Activated naive CD4-positive, alpha-beta T cell treated with anti-CD3 and anti-CD28 coated beads, Interleukin-2, amount 10 ng/mL, durations not matched to agents 7 days and 5 days (primary cell): ENCODE measurements at regions of chr11 and their contacts with region 1.

Region 1: DNA sequence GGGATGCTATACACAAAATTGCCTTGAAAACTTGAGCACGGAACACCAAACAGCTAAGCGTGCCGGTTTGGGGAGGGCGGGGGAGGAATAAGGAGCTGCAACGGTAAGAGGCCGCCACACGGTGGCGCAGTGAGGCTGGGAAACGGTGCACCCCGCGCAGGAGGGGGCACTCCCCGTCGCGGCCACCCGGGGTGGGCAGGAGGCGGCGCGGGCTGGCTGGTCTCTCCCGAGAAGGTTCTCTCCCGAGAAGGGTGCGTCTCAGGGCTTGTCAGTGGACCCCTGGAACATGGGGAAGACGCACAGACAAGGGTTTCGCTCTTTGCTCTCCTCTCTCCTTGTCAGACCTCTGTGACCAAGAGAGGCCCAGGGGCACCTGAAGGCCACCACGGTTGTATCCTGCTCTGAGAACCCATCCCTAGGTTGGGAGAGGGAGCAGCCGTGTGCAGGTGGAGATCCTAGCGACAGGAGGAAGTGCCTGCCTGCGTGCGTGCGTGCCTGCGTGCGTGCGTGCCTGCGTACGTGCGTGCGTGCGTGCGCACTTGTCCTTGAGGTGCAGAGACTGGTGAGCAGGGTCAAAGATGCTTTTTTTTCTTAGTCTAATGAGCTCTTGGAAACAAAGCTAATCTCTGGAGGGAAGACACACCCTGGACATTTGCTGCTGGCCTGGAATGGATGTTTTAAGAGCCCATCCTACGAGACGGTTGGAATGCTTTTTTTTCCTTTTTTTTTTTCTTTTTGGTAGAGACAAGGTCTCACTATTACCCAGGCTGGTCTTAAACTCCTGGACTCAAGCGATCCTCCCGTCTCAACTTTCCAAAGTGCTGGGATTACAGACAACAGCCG is 18.1 kb upstream of the JAM3 start:
- DNase-seq: peak; percentile 81
- H3K4me3 Mint-ChIP-seq: peak overlapping the region; percentile 64
- H3K27ac Mint-ChIP-seq: peak overlapping the region; percentile 85
- H3K4me1 Mint-ChIP-seq: peaks cover 17% of the 10 kb centered on the region
- H3K27me3 Mint-ChIP-seq: peaks cover 72% of the 10 kb centered on the region

Region 2: GRCh38 chr11:133745791-133746190 is 305.0 kb before region 1 on chr11:
- CTCF ChIA-PET with region 1: no interaction called
- DNase-seq: no peak
- H3K4me3 Mint-ChIP-seq: no peak overlapping the region
- H3K27ac Mint-ChIP-seq: no peak overlapping the region
- H3K4me1 Mint-ChIP-seq: no peaks in the 10 kb centered on the region
- H3K27me3 Mint-ChIP-seq: no peaks in the 10 kb centered on the region

Region 3: DNA sequence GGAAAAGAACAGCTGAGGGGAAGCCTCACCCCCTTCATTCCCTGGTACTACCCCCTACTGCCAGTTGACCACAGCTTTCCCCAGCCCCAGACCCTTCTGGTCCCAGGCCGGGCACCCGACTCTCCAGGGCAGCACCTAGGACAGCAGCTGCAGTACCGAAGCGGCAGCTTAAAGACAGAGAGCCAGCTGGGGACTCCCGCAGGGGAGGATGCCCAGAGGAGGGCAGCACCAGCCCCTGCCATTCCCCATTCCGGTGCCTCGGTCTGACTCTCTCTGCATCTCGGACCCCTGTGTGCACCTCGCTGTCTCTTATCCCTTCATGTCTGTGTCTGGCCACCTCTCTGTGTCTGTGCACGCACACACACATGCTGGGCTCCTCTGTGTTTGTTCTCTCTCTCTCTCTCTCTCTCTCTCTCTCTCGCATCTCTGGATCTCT is 103.4 kb before region 1 on chr11:
- CTCF ChIA-PET with region 1: interaction called, 12 read pairs
- DNase-seq: peak; percentile 86
- H3K4me3 Mint-ChIP-seq: peak overlapping the region; percentile 86
- H3K27ac Mint-ChIP-seq: peak overlapping the region; percentile 87
- H3K4me1 Mint-ChIP-seq: peaks cover 99% of the 10 kb centered on the region
- H3K27me3 Mint-ChIP-seq: no peaks in the 10 kb centered on the region

Region 4: DNA sequence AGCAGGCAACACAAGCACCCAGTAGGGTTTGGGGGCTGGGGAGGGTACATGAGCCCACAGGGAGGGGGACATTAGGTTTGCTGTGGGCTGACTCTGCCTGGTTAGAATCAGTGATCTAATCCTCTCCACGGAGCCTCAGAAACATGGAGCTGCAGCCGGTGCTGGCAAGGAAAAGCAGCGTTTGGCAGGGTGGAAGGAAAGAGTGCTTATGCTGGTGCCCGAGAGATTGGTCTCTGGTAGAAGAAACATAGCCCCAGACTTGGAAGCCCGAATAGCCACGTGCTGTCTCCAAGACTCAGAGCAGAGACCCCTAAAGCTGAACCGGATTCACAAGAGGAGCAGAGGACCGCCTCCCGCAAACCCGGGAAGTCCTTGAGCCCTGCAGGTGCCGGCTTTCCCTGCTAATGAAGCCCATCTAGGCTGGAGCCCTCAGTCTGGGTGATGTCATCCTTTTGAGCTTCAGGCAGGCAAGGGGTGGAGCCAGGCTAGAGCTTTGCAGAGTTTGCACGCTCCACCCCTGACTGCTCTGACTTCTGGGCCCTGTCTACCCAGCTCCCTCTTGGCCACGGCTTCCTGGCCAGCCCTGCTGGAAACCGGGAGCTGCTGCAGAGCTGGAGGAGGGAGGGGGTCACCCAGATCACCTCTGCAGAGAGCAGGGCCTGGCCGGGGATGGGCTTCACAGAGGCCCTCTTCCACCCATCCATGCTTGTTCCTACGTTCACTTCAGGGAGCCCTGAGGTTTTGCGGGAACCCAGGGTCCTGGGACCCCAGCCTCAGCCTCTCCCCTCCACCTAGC is 16.9 kb before region 1 on chr11:
- CTCF ChIA-PET with region 1: interaction called, 31 read pairs
- DNase-seq: peak; percentile 88
- H3K4me3 Mint-ChIP-seq: peak overlapping the region; percentile 50
- H3K27ac Mint-ChIP-seq: peak overlapping the region; percentile 86
- H3K4me1 Mint-ChIP-seq: peaks cover 81% of the 10 kb centered on the region
- H3K27me3 Mint-ChIP-seq: peaks cover 40% of the 10 kb centered on the region

Region 5: GRCh38 chr11:134062265-134063123 is 11.7 kb after region 1 on chr11:
- CTCF ChIA-PET with region 1: interaction called, 32 read pairs
- DNase-seq: no peak
- H3K4me3 Mint-ChIP-seq: no peak overlapping the region
- H3K27ac Mint-ChIP-seq: no peak overlapping the region
- H3K4me1 Mint-ChIP-seq: peaks cover 33% of the 10 kb centered on the region
- H3K27me3 Mint-ChIP-seq: peaks cover 74% of the 10 kb centered on the region

Region 6: DNA sequence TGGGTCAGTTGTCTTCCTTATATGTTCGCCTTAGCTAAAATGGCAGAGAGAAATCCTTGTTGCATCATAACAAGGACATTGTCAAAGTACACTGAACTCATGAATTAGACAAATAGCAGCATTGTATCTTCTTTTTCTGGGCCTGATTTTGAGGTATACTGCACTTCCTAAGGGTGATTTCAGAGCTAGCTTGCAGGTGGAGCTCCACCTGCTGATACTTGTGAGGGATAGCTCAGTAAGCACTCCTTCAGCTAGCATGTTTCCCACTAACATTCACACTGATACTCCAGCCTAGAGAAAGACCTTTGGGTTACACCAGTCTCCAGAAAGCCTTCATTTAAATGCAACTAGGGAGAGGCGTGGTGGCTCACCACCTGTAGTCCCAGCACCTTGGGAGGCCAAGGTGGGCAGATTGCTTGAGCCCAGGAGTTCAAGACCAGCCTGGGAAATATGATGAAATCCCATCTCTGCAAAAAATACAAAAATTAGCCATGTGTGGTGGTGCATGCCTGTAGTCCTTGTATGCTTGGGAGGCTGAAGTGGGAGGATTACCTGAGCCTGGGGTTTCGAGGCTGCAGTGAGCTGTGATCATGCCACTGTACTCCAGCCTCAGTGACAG is 47.9 kb after region 1 on chr11:
- CTCF ChIA-PET with region 1: interaction called, 49 read pairs
- DNase-seq: no peak
- H3K4me3 Mint-ChIP-seq: no peak overlapping the region
- H3K27ac Mint-ChIP-seq: no peak overlapping the region
- H3K4me1 Mint-ChIP-seq: no peaks in the 10 kb centered on the region
- H3K27me3 Mint-ChIP-seq: no peaks in the 10 kb centered on the region

Region 7: DNA sequence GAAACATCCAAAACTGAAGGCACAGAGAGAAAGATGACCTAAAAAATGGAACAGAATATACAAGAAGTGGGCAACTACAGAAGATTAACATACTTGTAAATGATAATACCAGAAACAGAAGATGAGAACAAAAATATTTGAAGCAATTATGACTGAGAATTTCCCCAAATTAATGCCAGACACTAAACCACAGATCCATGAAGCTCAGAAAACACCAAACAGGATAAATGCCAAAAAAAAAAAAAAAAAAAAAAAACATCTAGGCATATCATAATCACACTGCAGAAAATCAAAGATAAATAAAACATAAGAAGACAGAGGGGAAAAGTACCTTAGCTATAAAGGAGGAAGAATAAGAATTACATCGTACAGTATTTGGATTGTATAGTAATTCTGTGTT is 83.4 kb after region 1 on chr11:
- CTCF ChIA-PET with region 1: interaction called, 32 read pairs
- DNase-seq: no peak
- H3K4me3 Mint-ChIP-seq: no peak overlapping the region
- H3K27ac Mint-ChIP-seq: no peak overlapping the region
- H3K4me1 Mint-ChIP-seq: peaks cover under 1% of the 10 kb centered on the region
- H3K27me3 Mint-ChIP-seq: no peaks in the 10 kb centered on the region

Region 8: DNA sequence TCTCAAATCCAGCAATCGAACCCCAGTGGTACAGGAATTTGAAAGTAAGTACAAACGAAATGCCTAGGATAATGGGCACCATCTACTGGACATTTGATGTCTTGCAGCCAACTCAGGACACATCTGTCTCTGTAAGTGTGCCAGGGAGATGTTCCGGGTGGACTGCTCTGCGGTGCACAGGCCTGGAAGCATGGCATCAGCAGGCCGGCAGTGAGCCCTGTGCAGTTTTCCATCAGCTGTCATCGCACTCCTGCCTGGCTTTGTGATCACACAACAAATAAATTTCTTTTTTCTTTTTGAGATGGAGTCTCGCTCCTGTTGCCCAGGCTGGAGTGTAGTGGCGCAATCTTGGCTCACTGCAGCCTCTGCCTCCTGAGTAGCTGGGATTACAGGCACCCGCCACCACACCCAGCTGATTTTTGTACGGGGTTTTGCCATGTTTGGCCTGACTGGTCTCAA is 89.1 kb after region 1 on chr11:
- CTCF ChIA-PET with region 1: interaction called, 32 read pairs
- DNase-seq: peak; percentile 69
- H3K4me3 Mint-ChIP-seq: no peak overlapping the region
- H3K27ac Mint-ChIP-seq: no peak overlapping the region
- H3K4me1 Mint-ChIP-seq: peaks cover 17% of the 10 kb centered on the region
- H3K27me3 Mint-ChIP-seq: no peaks in the 10 kb centered on the region

Region 9: DNA sequence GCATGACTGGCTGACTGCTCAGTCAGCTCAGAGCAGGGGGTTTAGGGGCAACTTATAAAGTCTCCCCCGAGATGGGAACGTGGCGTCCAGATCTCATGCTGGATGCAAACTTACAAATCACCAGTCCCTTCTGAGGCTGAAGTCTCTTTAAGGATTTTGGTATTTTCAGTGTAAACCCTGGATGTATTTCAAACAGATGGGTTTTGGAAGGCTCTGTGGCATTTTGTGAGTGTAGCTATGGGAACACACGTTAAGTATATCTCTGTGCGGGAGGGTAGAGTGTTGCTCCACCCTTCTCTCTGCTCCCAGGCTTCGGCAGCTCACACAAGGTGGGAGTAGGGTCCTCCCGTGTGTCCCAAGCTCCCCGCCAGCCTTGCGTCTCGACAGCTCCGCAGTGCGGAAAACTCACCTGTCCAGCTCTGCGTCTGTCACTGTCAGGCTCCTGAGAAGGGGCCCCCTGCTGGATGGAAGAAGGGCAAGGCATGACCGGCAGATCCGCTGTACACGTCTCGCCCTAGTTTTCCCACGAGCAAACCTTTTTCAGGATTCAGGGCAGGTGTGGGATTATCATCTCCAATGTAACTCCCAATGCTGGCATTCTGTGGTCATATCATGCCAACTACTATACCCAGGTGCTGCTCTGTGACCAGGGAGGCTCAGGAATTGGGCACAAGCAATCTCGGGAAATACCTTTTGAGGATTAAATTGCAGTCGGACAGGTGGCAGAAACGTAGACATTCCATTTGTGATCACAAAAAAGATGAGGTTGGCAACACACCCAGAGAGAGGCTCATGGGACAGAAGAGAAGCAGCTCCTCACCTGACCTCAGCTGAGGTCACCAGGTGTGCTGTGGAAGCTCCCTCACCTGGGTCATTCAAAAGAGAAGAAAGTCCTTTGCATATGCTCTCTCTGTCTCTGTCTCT is 675.2 kb after region 1 on chr11:
- CTCF ChIA-PET with region 1: no interaction called
- DNase-seq: no peak
- H3K4me3 Mint-ChIP-seq: no peak overlapping the region
- H3K27ac Mint-ChIP-seq: no peak overlapping the region
- H3K4me1 Mint-ChIP-seq: no peaks in the 10 kb centered on the region
- H3K27me3 Mint-ChIP-seq: peaks cover 8% of the 10 kb centered on the region